ENCODE measurements at regions of chr11 and their contacts with region 1.

Region 1: GRCh38 chr11:65540297-65541092 is 15.6 kb downstream of the SCYL1 start:
- DNase-seq: peak; percentile 66 to 90
- H3K4me3 ChIP-seq: peak overlapping the region; percentile 46; the same call in 1 of the 2 replicates
- H3K27ac ChIP-seq: no peak overlapping the region
- H3K4me1 ChIP-seq: peaks cover 17% of the 10 kb centered on the region
- H3K27me3 ChIP-seq: no peaks in the 10 kb centered on the region
- CTCF ChIP-seq: peak; percentile 95

Region 2: GRCh38 chr11:65558002-65558931 is 17.8 kb after region 1 on chr11 and contains the start of gene LTBP3:
- CTCF ChIA-PET with region 1: interaction called, 7 read pairs
- POLR2A ChIA-PET with region 1: no interaction called
- intact Hi-C with region 1: loop called (anchors 1 kb)
- DNase-seq: peak; percentile 71 to 92
- H3K4me3 ChIP-seq: peak within 1 kb of the TSS; percentile 77
- H3K27ac ChIP-seq: peak within 1 kb of the TSS; percentile 69
- H3K4me1 ChIP-seq: peaks cover 71% of the 10 kb centered on the region
- H3K27me3 ChIP-seq: no peaks in the 10 kb centered on the region
- CTCF ChIP-seq: no peak
- total RNA-seq, gene LTBP3: 455 and 553 TPM in 2 replicates

Measured in PC-9 (cell line).